ENCODE measurements at regions of chr17 and their contacts with region 1.

Region 1: DNA sequence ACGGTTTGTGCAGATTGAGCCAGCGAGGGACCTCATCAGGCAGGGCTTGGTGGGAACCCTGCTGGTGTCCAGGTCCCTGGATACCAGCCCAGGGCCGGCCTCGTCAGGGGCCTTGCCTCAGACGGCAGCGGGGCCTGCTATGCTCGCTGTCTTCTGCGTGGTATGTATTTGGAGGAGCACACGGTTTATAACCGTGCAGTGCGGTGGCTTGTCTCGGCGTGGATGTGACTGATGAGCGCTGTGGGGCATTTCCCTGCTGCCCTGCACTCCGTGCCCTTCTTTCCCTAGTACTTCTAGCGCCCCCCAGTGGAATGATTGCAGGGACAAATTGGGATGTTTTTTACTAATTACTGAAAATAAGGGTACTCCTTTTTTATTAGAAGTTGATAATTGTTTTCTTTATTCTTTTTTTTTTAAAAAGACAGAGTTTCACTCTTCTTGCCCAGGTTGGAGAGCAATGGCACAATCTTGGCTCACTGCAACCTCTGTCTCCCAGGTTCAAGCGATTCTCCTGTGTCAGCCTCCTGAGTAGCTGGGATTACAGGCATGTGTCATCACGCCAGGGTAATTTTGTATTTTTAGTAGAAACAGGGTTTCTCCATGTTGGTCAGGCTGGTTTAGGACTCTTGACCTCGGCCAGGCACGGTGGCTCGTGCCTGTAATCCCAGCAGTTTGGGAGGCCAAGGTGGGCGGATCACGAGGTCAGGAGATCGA is 15.3 kb downstream of the TBCD start:
- DNase-seq: peak in 1 of 2 donors; percentile 84
- ATAC-seq: peak; percentile 70

Region 2: DNA sequence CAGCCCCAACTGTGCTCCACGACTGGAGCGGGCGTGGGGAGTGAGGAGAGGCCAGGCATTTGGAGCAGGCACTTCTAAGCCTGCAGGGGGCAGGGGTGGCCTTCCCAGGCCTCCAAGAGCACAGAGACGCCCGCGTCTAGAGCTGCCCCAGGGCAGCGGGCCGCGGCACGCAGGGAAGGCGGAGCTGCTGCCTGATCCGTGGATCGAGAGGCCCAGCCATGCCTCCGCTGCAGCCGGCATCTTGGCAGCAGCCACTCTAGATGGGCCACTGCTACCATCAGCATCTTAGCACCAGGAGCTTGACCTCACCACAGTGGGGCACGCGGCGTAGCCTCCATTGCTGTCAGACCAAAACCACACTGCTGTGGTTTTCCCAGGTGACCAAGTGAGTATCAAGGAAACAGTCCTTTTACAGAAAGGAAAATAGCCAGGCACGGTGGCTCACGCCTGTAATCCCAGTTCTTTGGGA is 98.5 kb before region 1 on chr17:
- intact Hi-C with region 1: loop called in 1 of 2 experiments (anchors 10 kb)
- DNase-seq: peak; percentile 69 to 80
- ATAC-seq: peak; percentile 94

Measured in left colon (tissue), 2 donors.